Caco-2 (cell line): ENCODE measurements at regions of chr15 and their contacts with region 1.

Region 1: GRCh38 chr15:78709263-78709882 is 68.4 kb upstream of the CHRNB4 start:
- DNase-seq: peak; percentile 63 to 83
- H3K4me3 ChIP-seq: no peak overlapping the region
- H3K4me3 Mint-ChIP-seq: no peak overlapping the region
- H3K27ac Mint-ChIP-seq: no peak overlapping the region
- H3K4me1 ChIP-seq: no peaks in the 10 kb centered on the region
- H3K4me1 Mint-ChIP-seq: no peaks in the 10 kb centered on the region
- H3K27me3 ChIP-seq: no peaks in the 10 kb centered on the region
- H3K27me3 Mint-ChIP-seq: peaks cover 11% of the 10 kb centered on the region
- CTCF ChIP-seq: peak; percentile 79

Region 2: DNA sequence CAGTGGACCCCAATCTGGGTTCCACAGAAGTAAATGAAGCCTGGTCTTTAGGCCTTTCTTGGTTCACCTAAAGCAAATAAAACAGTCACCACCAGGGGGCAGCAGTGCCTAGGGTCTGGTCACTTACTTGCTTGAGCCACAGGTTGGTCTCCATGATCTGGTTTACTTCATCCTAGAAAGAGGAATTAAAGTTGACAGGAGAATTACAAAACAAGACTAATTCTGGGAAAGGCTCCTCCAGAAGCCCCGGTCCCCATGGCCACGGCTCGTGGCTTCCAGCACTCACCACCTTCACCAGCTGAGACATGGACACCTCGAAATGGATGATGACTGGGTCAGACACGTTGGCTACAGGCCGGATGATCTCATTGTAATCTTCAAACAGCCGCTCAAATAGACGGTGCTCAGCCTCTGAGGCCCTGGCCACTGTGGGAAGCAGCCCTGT is 90.9 kb before region 1 on chr15:
- CTCF ChIA-PET with region 1: no interaction called
- POLR2A ChIA-PET with region 1: no interaction called
- intact Hi-C with region 1: loop called (anchors 1 kb)
- DNase-seq: peak; percentile 80 to 87
- H3K4me3 ChIP-seq: no peak overlapping the region
- H3K4me3 Mint-ChIP-seq: no peak overlapping the region
- H3K27ac Mint-ChIP-seq: no peak overlapping the region
- H3K4me1 ChIP-seq: no peaks in the 10 kb centered on the region
- H3K4me1 Mint-ChIP-seq: no peaks in the 10 kb centered on the region
- H3K27me3 ChIP-seq: no peaks in the 10 kb centered on the region
- H3K27me3 Mint-ChIP-seq: peaks cover 4% of the 10 kb centered on the region
- CTCF ChIP-seq: peak; percentile 66 to 79

Region 3: DNA sequence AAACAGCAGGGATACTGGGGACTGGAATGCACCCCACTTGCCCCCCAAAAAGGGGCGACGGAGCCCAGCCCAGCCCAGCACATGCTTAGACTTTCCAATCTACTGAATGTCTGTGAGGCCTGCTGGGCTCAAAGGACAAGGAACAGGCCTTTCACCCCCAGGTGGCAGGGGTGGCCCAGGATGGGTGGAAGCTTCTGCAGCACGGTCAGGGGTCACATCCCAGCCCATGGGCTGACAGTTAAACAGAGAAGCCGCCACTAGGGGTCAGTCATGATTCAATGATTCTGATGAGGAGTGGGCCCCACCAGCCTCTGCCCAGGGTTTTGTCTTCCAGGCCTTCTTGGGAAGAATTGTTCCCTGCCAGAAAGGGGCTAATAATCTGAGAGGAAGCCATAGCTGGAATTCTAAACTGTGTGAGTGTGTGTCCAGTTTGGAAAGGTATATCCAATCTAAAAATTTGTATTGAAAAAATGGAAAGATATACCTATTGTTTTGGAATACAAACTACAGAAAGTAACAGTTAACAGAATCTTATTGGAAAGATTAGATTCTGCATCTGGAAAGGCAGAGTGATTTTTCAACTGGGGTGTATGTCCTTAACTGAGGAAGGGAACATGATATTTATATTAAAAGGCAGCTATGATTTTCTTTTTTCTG is 70.6 kb before region 1 on chr15:
- CTCF ChIA-PET with region 1: interaction called, 5 read pairs
- POLR2A ChIA-PET with region 1: no interaction called
- intact Hi-C with region 1: loop called (anchors 1 kb)
- DNase-seq: peak; percentile 76 to 79
- H3K4me3 ChIP-seq: no peak overlapping the region
- H3K4me3 Mint-ChIP-seq: no peak overlapping the region
- H3K27ac Mint-ChIP-seq: no peak overlapping the region
- H3K4me1 ChIP-seq: no peaks in the 10 kb centered on the region
- H3K4me1 Mint-ChIP-seq: no peaks in the 10 kb centered on the region
- H3K27me3 ChIP-seq: no peaks in the 10 kb centered on the region
- H3K27me3 Mint-ChIP-seq: peaks cover 10% of the 10 kb centered on the region
- CTCF ChIP-seq: peak; percentile 50 to 66

Region 4: GRCh38 chr15:78750566-78750965 is 41.2 kb after region 1 on chr15:
- CTCF ChIA-PET with region 1: no interaction called
- POLR2A ChIA-PET with region 1: no interaction called
- intact Hi-C with region 1: no loop called
- DNase-seq: peak in 1 of 2 experiments; percentile 15
- H3K4me3 ChIP-seq: no peak overlapping the region
- H3K4me3 Mint-ChIP-seq: no peak overlapping the region
- H3K27ac Mint-ChIP-seq: no peak overlapping the region
- H3K4me1 ChIP-seq: 0 out of 2 replicates have a peak, but pooled peaks cover 3% of the 10 kb centered on the region
- H3K4me1 Mint-ChIP-seq: no peaks in the 10 kb centered on the region
- H3K27me3 ChIP-seq: no peaks in the 10 kb centered on the region
- H3K27me3 Mint-ChIP-seq: no peaks in the 10 kb centered on the region
- CTCF ChIP-seq: no peak

Region 5: DNA sequence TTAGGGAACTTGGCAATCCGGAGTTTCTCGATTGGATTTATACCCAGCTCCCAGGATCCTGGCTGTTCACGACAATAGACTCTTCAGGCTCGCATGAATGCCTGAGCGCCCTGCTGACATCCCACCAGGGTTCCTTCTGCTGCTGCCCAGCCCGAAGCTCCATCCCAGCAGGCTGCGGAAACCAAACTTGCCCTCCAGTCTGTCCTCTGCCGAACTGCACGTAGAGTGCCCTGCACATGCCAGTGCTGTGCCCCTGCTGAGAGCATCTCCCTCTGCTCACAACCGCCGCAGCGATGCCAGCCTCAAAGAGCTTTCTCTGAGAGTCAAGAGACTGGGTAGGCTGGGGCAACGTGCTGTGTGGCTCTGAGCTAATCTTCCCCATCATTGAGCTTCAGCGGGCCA is 95.0 kb after region 1 on chr15:
- CTCF ChIA-PET with region 1: no interaction called
- POLR2A ChIA-PET with region 1: no interaction called
- intact Hi-C with region 1: no loop called
- DNase-seq: no peak
- H3K4me3 ChIP-seq: no peak overlapping the region
- H3K4me3 Mint-ChIP-seq: no peak overlapping the region
- H3K27ac Mint-ChIP-seq: no peak overlapping the region
- H3K4me1 ChIP-seq: no peaks in the 10 kb centered on the region
- H3K4me1 Mint-ChIP-seq: no peaks in the 10 kb centered on the region
- H3K27me3 ChIP-seq: no peaks in the 10 kb centered on the region
- H3K27me3 Mint-ChIP-seq: no peaks in the 10 kb centered on the region
- CTCF ChIP-seq: no peak

Region 6: GRCh38 chr15:79160211-79160610 is 450.8 kb after region 1 on chr15:
- CTCF ChIA-PET with region 1: no interaction called
- POLR2A ChIA-PET with region 1: no interaction called
- intact Hi-C with region 1: no loop called
- DNase-seq: no peak
- H3K4me3 ChIP-seq: no peak overlapping the region
- H3K4me3 Mint-ChIP-seq: no peak overlapping the region
- H3K27ac Mint-ChIP-seq: no peak overlapping the region
- H3K4me1 ChIP-seq: no peaks in the 10 kb centered on the region
- H3K4me1 Mint-ChIP-seq: no peaks in the 10 kb centered on the region
- H3K27me3 ChIP-seq: no peaks in the 10 kb centered on the region
- H3K27me3 Mint-ChIP-seq: peaks cover 10% of the 10 kb centered on the region
- CTCF ChIP-seq: no peak